ENCODE measurements at regions of chr7 and their contacts with region 1.

Region 1: GRCh38 chr7:24757353-24758275 is at the start of gene GSDME:
- DNase-seq: peak; percentile 26 to 90 (median 61)

Region 2: DNA sequence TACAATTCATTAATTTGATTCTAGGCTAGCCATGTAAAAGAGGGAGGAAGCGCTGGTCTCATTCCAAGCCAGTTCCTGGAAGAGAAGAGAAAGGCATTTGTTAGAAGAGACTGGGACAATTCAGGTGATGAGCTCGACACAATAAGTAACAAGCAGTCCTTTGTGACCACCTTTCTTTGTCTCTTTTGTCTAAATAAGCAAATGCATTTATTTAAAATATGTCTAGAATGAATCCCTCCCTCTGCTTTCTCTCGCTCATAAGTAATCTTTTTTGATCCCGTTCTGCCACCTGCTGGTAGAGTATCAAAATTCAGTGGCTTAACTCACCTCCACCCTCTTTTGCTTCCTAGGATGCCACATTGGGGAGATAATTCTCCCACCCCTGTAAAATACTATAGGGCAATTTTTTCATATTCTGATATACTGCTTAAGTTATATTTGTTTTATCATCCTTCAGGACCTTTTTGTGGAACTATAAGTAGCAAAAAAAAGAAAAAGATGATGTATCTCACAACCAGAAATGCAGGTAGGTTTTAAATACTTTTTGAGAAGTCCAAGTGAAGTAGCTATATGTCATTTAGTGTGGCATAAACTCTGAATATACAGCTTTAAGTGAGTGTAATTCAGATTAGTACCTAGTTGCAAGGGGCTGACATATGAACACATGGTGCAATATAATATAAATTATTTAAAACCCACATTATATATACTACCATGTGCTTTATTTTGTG is 91.9 kb before region 1 on chr7:
- intact Hi-C with region 1: no loop called
- DNase-seq: peak in 2 of 10 donors; percentile 29 to 44

Region 3: DNA sequence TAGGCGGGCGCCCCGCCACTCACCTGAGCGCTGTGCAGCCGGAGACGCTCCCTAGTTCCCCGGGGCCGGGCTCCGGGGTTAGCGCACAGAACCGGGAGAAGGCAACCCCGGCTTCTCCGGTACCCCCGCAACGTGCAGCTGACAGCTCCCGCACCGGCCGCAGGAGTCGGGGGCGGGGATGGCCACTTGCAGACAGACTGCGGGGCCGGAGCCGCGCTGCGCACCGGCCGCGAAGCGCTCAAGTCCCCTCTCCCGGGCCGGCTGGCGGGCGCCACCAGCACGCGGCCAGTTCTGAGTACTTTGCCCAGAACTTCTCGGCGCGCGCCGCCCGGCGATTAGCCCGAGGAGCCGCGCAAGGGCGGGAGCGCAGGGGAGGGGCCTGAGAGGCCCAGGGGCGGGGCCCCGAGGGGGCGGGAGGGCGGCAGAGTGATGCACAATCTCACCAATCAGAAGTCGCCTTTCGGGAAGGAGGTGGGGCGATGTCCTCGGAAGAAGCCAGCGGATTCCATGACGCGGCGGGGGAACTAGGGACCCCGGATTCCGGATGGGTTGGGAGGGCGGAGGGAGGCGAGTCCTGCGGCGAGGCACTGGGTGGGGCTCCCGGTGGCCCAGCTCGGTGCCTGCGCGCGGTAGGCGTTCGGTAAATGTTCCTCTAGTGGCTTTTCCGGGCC is 222.4 kb after region 1 on chr7 and contains the start of gene OSBPL3:
- intact Hi-C with region 1: loop called (anchors 2 kb)
- DNase-seq: peak; percentile 93 to 99 (median 96)

Measured in posterior cingulate gyrus (tissue), 11 donors.